ENCODE measurements at regions of chr12 and their contacts with region 1.

Region 1: DNA sequence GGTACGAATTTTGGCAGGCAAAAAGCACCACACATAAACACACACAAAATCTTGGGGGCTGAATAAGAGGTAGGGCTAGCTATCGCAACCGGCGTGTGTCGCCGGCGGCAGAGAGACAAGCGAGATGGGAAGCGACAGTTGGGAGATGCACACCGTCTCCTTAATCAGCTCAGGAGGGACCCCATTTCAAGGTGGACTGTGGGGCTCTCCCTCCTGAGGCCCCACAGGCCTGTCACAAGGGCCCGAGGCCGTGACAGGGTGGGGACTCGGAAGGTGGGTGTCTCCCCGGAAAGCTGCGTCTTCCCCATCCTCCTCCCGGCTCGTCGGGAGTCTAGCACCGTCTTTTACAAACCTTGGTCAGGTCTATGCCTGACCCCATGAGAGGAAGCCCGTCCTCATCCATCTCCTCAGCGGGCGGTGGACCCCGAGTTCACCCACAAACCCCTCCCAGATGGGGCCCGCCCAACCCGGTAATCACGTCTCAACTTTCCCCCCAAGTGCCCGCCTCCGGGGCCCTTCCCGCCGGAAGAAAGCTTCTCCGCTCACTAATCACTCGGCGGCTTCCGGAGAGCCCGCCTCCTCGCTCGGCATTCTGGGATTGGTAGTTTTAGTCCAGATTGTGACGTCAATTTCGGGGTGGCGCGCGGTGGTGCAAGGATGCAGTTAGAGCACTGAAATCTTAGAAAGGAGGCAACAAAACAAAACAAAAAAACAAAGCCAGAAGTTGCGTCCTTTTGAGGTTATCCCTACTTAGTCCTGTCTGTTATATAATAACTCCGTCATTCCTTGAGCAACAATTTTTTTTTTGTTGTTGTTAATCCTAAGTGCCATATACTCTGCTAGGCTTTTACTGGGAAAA is at the start of gene WASHC3:
- DNase-seq: peak; percentile 94
- H3K4me3 Mint-ChIP-seq: peak within 1 kb of the TSS; percentile 93
- H3K27ac Mint-ChIP-seq: peak within 1 kb of the TSS; percentile 97
- H3K4me1 Mint-ChIP-seq: peaks cover 42% of the 10 kb centered on the region
- H3K27me3 Mint-ChIP-seq: no peaks in the 10 kb centered on the region
- total RNA-seq, gene WASHC3: 20.4 and 26.3 TPM in 2 replicates

Region 2: GRCh38 chr12:101280006-101280505 is 781.7 kb before region 1 on chr12 and contains the start of gene UTP20:
- intact Hi-C with region 1: loop called (anchors 10 kb)
- DNase-seq: peak; percentile 89
- H3K4me3 Mint-ChIP-seq: peak within 1 kb of the TSS; percentile 96
- H3K27ac Mint-ChIP-seq: peak within 1 kb of the TSS; percentile 75
- H3K4me1 Mint-ChIP-seq: peaks cover 22% of the 10 kb centered on the region
- H3K27me3 Mint-ChIP-seq: peaks cover 15% of the 10 kb centered on the region
- total RNA-seq, gene UTP20: 41.8 and 46.0 TPM in 2 replicates

Region 3: DNA sequence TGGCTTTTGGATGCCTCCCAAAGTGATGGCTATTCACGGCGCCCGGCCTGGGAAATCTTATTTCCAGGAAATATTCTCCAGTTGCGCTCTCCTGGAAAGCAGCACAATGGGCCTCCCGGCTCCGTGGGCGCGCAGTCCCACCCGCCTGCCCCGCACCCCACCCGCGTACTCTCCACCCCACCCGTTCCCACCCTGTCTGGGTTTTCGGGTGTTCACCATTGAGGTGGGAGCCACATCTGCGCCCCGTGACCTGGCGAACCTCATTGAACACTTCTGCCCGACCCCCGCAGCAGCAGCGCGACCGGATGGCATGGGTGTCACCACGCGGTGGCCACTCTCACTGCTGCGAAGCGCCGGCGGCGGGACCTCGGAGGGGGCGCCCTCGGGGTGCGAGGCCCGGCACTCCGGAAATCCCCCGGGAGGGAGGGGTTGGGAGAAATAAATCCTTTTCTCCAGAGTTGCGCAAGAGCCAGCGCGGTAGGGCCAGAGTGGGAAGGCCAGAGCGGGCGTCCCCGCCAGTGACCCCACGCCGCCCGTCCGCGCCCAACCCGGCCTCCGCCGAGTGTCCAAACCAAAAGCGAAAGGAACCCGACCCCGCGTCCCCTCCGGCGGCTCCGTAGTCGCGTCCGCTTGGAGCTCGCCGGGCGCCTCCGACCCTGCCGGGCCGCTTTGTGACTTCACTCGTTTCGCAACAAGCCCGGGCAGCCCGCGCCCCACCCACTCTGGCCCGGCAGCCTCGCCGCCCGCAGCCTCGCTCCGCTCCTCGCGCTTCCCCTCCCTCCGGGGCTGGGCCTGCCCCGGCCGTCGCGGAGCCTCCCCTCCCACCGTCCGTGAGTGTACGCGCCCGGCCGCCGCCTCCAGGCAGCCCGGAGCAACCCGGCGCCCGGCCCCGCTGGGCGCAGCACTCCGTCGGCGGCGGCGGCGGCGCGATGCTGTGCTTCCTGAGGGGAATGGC is 184.7 kb before region 1 on chr12 and contains the start of gene DRAM1:
- intact Hi-C with region 1: loop called (anchors 1 kb)
- DNase-seq: peak; percentile 78
- H3K4me3 Mint-ChIP-seq: peak within 1 kb of the TSS; percentile 90
- H3K27ac Mint-ChIP-seq: peak within 1 kb of the TSS; percentile 83
- H3K4me1 Mint-ChIP-seq: peaks cover 12% of the 10 kb centered on the region
- H3K27me3 Mint-ChIP-seq: no peaks in the 10 kb centered on the region
- total RNA-seq, gene DRAM1: 3.2 and 4.1 TPM in 2 replicates

Region 4: GRCh38 chr12:101909646-101910045 is 152.1 kb before region 1 on chr12:
- intact Hi-C with region 1: no loop called
- DNase-seq: no peak
- H3K4me3 Mint-ChIP-seq: no peak overlapping the region
- H3K27ac Mint-ChIP-seq: no peak overlapping the region
- H3K4me1 Mint-ChIP-seq: no peaks in the 10 kb centered on the region
- H3K27me3 Mint-ChIP-seq: no peaks in the 10 kb centered on the region

Region 5: GRCh38 chr12:101992091-101992490 is 69.7 kb before region 1 on chr12:
- intact Hi-C with region 1: no loop called
- DNase-seq: no peak
- H3K4me3 Mint-ChIP-seq: no peak overlapping the region
- H3K27ac Mint-ChIP-seq: no peak overlapping the region
- H3K4me1 Mint-ChIP-seq: no peaks in the 10 kb centered on the region
- H3K27me3 Mint-ChIP-seq: peaks cover 24% of the 10 kb centered on the region

Region 6: GRCh38 chr12:102043928-102044327 is 17.9 kb before region 1 on chr12:
- intact Hi-C with region 1: loop called (anchors 1 kb)
- DNase-seq: peak; percentile 23
- H3K4me3 Mint-ChIP-seq: peak overlapping the region; percentile 15
- H3K27ac Mint-ChIP-seq: peak overlapping the region; percentile 71
- H3K4me1 Mint-ChIP-seq: peaks cover 14% of the 10 kb centered on the region
- H3K27me3 Mint-ChIP-seq: no peaks in the 10 kb centered on the region

Region 7: DNA sequence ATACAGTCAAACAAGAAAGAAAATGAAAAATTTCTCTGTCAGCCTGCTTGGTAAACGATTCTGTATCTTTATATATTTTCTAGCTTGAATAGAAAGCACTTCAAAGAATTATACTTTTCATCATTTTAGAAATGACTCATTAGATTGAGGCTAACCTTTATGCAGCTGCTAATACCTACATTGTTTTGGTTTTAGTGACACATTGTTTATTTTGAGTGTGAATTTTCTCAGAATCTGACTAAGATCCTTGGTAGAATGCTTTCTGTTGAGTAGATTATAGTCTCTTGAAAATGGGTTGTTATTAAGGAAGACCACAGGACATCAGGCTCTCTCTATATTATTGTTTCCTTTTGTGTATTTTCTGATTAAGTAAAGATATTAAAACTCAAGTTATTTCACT is 136.0 kb after region 1 on chr12 and contains the start of gene PMCH:
- intact Hi-C with region 1: loop called (anchors 1 kb)
- DNase-seq: no peak
- H3K4me3 Mint-ChIP-seq: peak within 1 kb of the TSS; percentile 2
- H3K27ac Mint-ChIP-seq: peak within 1 kb of the TSS; percentile 75
- H3K4me1 Mint-ChIP-seq: peaks cover 20% of the 10 kb centered on the region
- H3K27me3 Mint-ChIP-seq: no peaks in the 10 kb centered on the region
- total RNA-seq, gene PMCH: 3.1 and 4.3 TPM in 2 replicates

Region 8: GRCh38 chr12:103632554-103633216 is 1570.9 kb after region 1 on chr12:
- intact Hi-C with region 1: no loop called
- DNase-seq: peak; percentile 55
- H3K4me3 Mint-ChIP-seq: no peak overlapping the region
- H3K27ac Mint-ChIP-seq: no peak overlapping the region
- H3K4me1 Mint-ChIP-seq: no peaks in the 10 kb centered on the region
- H3K27me3 Mint-ChIP-seq: peaks cover 17% of the 10 kb centered on the region

Region 9: GRCh38 chr12:103930034-103930786 is 1868.4 kb after region 1 on chr12 and contains the start of gene HSP90B1:
- intact Hi-C with region 1: loop called (anchors 2 kb)
- DNase-seq: peak; percentile 100
- H3K4me3 Mint-ChIP-seq: peak within 1 kb of the TSS; percentile 91
- H3K27ac Mint-ChIP-seq: peak within 1 kb of the TSS; percentile 99
- H3K4me1 Mint-ChIP-seq: peaks cover 73% of the 10 kb centered on the region
- H3K27me3 Mint-ChIP-seq: peaks cover 6% of the 10 kb centered on the region
- total RNA-seq, gene HSP90B1: 427 and 446 TPM in 2 replicates

Measured in activated T-helper 1 cell treated with anti-CD3 and anti-CD28 coated beads, Interleukin-12 subunit alpha, Interleukin-12 subunit beta, Interleukin-2, Interleukin-4 antibody, amounts not matched to agents 30 ng/mL and 10 ng/mL and 1 ng/mL, durations not matched to agents 14 hours and 24 hours and 36 hours (primary cell).